AG04449 (cell line): ENCODE measurements at regions of chr13 and their contacts with region 1.

Region 1: GRCh38 chr13:72696579-72696978 is 30.9 kb downstream of the MZT1 start:
- DNase-seq: no peak
- H3K4me3 ChIP-seq: no peak overlapping the region
- CTCF ChIP-seq: no peak

Region 2: DNA sequence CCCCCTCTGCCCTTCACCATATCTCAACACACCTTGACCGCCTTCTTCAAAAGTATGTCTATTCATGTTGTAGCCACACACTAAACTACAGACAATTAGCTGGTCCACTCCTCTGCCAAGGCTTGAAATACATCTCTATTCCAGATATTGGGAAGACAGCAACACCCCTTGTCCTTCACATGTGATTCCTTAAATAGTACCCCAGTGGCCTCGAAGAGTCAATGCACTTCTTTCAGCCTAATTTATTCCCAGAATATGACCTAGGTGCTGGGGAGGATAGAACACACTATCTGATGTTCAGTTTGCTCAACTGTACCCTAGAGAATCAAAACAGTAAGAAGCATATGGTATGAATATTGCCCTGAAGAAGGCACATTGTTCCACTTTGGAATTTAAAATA is 747.1 kb before region 1 on chr13:
- CTCF ChIA-PET with region 1: no interaction called
- POLR2A ChIA-PET with region 1: no interaction called
- DNase-seq: no peak
- H3K4me3 ChIP-seq: no peak overlapping the region
- CTCF ChIP-seq: no peak

Region 3: GRCh38 chr13:72643311-72643989 is 53.1 kb before region 1 on chr13:
- CTCF ChIA-PET with region 1: interaction called, 33 read pairs
- POLR2A ChIA-PET with region 1: no interaction called
- DNase-seq: no peak
- H3K4me3 ChIP-seq: no peak overlapping the region
- CTCF ChIP-seq: peak; percentile 52